Natural killer cell (primary cell): ENCODE measurements at regions of chr17 and their contacts with region 1.

Region 1: DNA sequence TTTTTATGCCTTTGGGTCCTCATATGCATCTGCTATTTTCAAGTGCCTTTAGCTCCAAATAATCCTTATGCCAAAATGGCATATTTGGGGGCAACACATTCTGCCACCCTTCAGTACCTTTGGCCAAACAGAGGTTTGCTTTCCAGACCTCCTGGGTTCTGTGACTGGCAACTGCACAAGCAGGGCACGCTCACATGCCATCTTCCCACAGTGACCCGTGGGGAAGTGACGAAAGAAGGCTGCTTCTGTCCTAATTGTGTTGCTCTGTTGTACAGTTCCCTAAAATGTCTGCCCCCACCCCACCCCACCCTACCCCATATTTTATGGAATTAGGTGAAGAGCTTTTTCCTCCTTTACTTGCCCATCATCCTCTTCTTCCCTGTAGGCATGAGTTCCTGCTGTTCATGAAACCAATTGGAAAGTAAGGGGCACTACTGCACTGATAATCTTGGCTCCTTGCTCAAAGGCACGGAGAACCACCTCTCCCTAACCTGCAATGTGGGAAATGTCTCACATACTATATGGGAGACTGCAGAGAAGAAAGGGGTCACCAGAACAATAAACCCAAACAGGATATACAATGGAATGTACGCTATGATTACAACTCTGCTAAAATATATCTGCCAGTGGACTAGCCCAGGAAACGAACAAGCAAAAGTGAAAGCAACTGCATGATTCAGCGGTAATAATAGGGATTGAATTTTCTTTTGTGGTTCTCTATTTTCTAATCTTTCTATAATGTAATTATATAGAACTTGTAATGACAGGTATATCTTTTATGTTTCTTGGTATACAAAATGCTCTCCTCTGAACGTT is 3.3 kb upstream of the SLFN12L start:
- DNase-seq: peak in 1 of 2 donors; percentile 74
- ATAC-seq: peak; percentile 42 to 61 (median 54)
- H3K4me3 ChIP-seq: peak overlapping the region; percentile 39
- H3K4me3 Mint-ChIP-seq: peak overlapping the region; percentile 90
- H3K27ac ChIP-seq: peak overlapping the region; percentile 88
- H3K27ac Mint-ChIP-seq: peak overlapping the region; percentile 84 to 88
- H3K4me1 ChIP-seq: peaks cover 26% of the 10 kb centered on the region
- H3K4me1 Mint-ChIP-seq: peaks cover 46 to 53% of the 10 kb centered on the region in 2 donors
- H3K27me3 ChIP-seq: no peaks in the 10 kb centered on the region
- H3K27me3 Mint-ChIP-seq: no peaks in the 10 kb centered on the region
- CTCF ChIP-seq: no peak

Region 2: DNA sequence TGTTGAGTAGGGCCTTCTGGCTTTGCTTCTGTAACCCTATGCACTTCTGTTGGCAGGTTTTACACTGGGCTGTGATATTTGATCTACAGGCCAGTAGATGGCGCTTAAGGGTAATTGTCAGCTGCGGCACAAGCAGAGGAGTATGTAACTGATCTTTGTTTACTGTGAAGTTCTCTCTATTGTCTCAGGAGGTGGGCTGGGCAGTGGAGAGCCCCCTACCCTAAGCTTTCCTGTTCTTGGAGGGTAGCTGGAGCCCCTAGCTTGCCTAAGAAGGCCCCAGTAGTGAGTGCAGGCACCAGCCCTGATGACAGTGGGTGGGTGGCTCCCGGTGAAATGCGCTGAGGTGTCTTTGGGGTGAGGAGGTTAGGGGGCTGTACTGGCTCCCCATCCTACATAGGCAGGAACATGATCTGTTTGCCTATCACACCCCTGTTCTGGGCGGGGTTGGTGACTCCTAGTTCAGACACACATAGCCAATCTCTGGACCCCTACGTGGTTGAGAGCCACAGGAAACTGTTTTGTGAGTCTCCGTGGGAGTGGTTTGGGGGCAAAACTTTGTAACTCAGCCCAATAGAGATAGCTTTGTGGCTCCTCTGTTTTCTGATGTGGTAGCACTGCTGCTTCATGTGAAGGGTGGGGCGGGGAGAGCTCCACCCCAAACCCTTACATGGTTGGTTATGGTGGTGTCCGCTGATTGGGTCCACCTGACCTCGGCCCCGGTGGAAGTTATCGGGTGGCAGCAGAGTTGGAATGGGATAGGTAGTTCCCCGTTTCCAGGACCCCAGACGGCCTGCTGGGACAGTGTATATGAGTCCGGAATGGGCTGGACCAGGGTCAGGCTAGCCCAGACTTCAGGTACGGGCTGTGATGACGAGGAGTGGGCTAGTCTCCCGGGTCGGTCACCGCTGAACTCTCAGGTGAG is 227.7 kb before region 1 on chr17:
- intact Hi-C with region 1: loop called (anchors 1 kb)
- DNase-seq: peak; percentile 83 to 96
- ATAC-seq: peak; percentile 87 to 95 (median 89)
- H3K4me3 ChIP-seq: peak overlapping the region; percentile 73
- H3K4me3 Mint-ChIP-seq: peak overlapping the region; percentile 99
- H3K27ac ChIP-seq: peak overlapping the region; percentile 90
- H3K27ac Mint-ChIP-seq: peak overlapping the region; percentile 99 to 100
- H3K4me1 ChIP-seq: peaks cover 22% of the 10 kb centered on the region
- H3K4me1 Mint-ChIP-seq: peaks cover 47 to 55% of the 10 kb centered on the region in 2 donors
- H3K27me3 ChIP-seq: no peaks in the 10 kb centered on the region
- H3K27me3 Mint-ChIP-seq: no peaks in the 10 kb centered on the region
- CTCF ChIP-seq: peak; percentile 93

Region 3: DNA sequence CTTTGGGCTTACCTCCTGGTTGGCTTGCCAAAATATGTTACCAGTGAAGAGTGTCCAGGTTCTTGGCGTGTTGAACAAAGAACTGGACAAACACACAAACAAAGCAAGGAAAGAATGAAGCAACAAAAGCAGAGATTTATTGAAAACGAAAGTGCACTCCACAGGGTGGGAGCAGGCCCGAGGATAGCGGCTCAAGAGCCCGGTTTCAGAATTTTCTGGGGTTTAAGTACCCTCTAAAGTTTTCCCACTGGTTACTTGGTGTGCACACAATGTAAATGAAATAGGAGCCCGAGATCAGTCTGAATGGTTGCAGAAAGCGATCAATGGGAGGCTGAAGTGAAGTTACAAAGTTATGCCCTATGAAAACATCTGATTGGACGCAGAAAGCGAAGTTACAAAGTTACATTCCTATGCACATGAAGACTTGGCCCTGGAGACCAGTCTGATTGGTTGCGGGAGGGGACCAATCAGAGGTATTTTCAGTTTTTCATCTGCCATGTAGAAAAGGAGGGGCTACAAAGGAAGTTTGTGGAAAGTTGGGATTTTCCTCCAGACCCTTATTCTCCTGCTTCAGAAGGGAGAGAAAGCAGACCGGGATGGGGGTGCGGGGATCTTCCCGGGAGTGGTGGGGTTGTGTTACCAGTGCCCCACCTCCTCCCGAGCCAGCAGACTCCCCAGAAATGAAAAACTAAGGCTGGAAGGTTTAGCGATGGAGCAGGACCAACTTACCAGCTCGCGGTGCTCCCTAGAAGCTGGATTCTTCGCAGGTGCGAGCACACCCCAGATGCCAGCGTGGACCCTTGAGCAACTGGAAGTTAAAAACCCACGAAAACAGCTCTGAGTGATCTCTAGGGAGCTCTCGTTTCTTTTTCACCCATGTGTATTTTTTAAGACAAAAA is 108.4 kb before region 1 on chr17 and contains the start of gene SLFN12:
- intact Hi-C with region 1: loop called (anchors 1 kb)
- DNase-seq: peak; percentile 47 to 84
- ATAC-seq: peak; percentile 83 to 90 (median 89)
- H3K4me3 ChIP-seq: peak within 1 kb of the TSS; percentile 62
- H3K4me3 Mint-ChIP-seq: peak within 1 kb of the TSS; percentile 99
- H3K27ac ChIP-seq: peak within 1 kb of the TSS; percentile 55
- H3K27ac Mint-ChIP-seq: peak within 1 kb of the TSS; percentile 95 to 96
- H3K4me1 ChIP-seq: peaks cover 33% of the 10 kb centered on the region
- H3K4me1 Mint-ChIP-seq: peaks cover 63% of the 10 kb centered on the region in 2 donors
- H3K27me3 ChIP-seq: no peaks in the 10 kb centered on the region
- H3K27me3 Mint-ChIP-seq: no peaks in the 10 kb centered on the region
- CTCF ChIP-seq: no peak
- total RNA-seq, gene SLFN12: 18.6 to 30.9 (median 21.8) TPM

Region 4: GRCh38 chr17:35486920-35487732 is 53.7 kb before region 1 on chr17:
- intact Hi-C with region 1: loop called (anchors 2 kb)
- DNase-seq: peak; percentile 72 to 87
- ATAC-seq: peak; percentile 50 to 77 (median 72)
- H3K4me3 ChIP-seq: peak overlapping the region; percentile 86
- H3K4me3 Mint-ChIP-seq: peak overlapping the region; percentile 97
- H3K27ac ChIP-seq: peak overlapping the region; percentile 95
- H3K27ac Mint-ChIP-seq: peak overlapping the region; percentile 94 to 97
- H3K4me1 ChIP-seq: peaks cover 35% of the 10 kb centered on the region
- H3K4me1 Mint-ChIP-seq: peaks cover 85 to 88% of the 10 kb centered on the region in 2 donors
- H3K27me3 ChIP-seq: no peaks in the 10 kb centered on the region
- H3K27me3 Mint-ChIP-seq: no peaks in the 10 kb centered on the region
- CTCF ChIP-seq: no peak

Region 5: GRCh38 chr17:35953720-35954119 is 412.9 kb after region 1 on chr17:
- intact Hi-C with region 1: no loop called
- DNase-seq: no peak
- ATAC-seq: no peak
- H3K4me3 ChIP-seq: no peak overlapping the region
- H3K4me3 Mint-ChIP-seq: no peak overlapping the region
- H3K27ac ChIP-seq: no peak overlapping the region
- H3K27ac Mint-ChIP-seq: no peak overlapping the region
- H3K4me1 ChIP-seq: no peaks in the 10 kb centered on the region
- H3K4me1 Mint-ChIP-seq: peaks cover 6 to 16% of the 10 kb centered on the region in 2 donors
- H3K27me3 ChIP-seq: no peaks in the 10 kb centered on the region
- H3K27me3 Mint-ChIP-seq: no peaks in the 10 kb centered on the region
- CTCF ChIP-seq: no peak

Region 6: GRCh38 chr17:36183001-36183971 is 642.5 kb after region 1 on chr17:
- intact Hi-C with region 1: loop called (anchors 10 kb)
- DNase-seq: peak; percentile 62 to 68
- ATAC-seq: peak; percentile 58 to 61 (median 59)
- H3K4me3 ChIP-seq: peak overlapping the region; percentile 28
- H3K4me3 Mint-ChIP-seq: peak overlapping the region; percentile 92
- H3K27ac ChIP-seq: no peak overlapping the region
- H3K27ac Mint-ChIP-seq: peak overlapping the region; percentile 93 to 98
- H3K4me1 ChIP-seq: peaks cover 62% of the 10 kb centered on the region
- H3K4me1 Mint-ChIP-seq: peaks cover 48 to 73% of the 10 kb centered on the region in 2 donors
- H3K27me3 ChIP-seq: peaks cover 9% of the 10 kb centered on the region
- H3K27me3 Mint-ChIP-seq: no peaks in the 10 kb centered on the region
- CTCF ChIP-seq: no peak